AG04449 (cell line): ENCODE measurements at regions of chr1 and their contacts with region 1.

Region 1: GRCh38 chr1:36099681-36100341 is 11.1 kb downstream of the ADPRS start:
- DNase-seq: no peak
- H3K4me3 ChIP-seq: no peak overlapping the region
- CTCF ChIP-seq: peak; percentile 91

Region 2: GRCh38 chr1:36115200-36115669 is 15.4 kb after region 1 on chr1:
- CTCF ChIA-PET with region 1: interaction called, 84 read pairs
- POLR2A ChIA-PET with region 1: no interaction called
- DNase-seq: peak; percentile 55
- H3K4me3 ChIP-seq: 0 out of 2 replicates have a peak overlapping the region, but pooled peaks have one; percentile 1
- CTCF ChIP-seq: no peak

Region 3: DNA sequence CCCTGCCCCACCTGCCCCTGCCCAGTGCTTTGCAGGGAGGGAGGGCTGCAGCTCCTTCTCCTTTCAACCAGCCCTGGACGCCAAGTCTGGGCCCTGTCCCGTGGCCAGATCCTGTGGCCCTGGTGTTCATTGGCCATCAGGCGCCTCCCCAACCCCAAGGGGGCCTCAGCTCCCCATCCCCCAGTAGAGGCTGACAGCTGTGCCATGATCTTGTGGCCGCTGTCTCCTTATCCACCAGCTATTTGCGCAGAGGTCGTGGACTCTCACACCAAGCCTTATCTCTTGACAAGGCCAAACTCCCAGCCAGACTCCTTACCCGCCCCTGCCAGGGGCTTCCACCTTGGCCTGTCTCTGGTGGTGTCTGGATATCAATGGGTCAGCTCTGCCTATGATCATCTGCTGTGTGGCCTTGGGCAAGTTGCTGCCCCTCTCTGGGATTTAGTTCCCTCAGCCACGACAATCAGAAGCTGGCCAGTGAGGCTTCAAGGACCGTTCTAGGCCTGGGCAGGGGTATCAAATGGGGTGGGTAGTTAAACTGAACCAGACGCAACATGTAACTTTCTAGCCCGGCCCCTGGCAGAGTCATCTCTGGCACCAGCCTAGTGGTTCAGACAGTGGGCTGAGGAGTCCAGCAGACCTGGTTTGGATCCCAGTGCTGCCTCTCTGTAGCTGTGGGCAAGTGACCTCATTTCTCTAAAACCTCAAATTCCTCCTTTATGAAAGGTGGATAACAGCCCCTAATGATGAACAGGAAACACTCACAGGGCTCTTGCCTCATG is 28.5 kb after region 1 on chr1:
- CTCF ChIA-PET with region 1: interaction called, 453 read pairs
- POLR2A ChIA-PET with region 1: no interaction called
- DNase-seq: no peak
- H3K4me3 ChIP-seq: no peak overlapping the region
- CTCF ChIP-seq: no peak